ENCODE measurements at regions of chr9 and their contacts with region 1.

Region 1: GRCh38 chr9:133103183-133103986 is 17.7 kb downstream of the RALGDS start:
- DNase-seq: peak; percentile 74
- ATAC-seq: peak; percentile 89
- H3K4me3 ChIP-seq: no peak overlapping the region
- H3K4me3 Mint-ChIP-seq: no peak overlapping the region
- H3K27ac ChIP-seq: no peak overlapping the region
- H3K27ac Mint-ChIP-seq: peak overlapping the region; percentile 21
- H3K4me1 ChIP-seq: no peaks in the 10 kb centered on the region
- H3K4me1 Mint-ChIP-seq: no peaks in the 10 kb centered on the region
- H3K27me3 ChIP-seq: no peaks in the 10 kb centered on the region
- H3K27me3 Mint-ChIP-seq: no peaks in the 10 kb centered on the region
- CTCF ChIP-seq: peak; percentile 97

Region 2: GRCh38 chr9:133115448-133116345 is 12.3 kb after region 1 on chr9:
- CTCF ChIA-PET with region 1: interaction called, 34 read pairs
- POLR2A ChIA-PET with region 1: interaction called, 3 read pairs
- intact Hi-C with region 1: no loop called
- DNase-seq: peak; percentile 66
- ATAC-seq: peak; percentile 56
- H3K4me3 ChIP-seq: no peak overlapping the region
- H3K4me3 Mint-ChIP-seq: peak overlapping the region; percentile 67
- H3K27ac ChIP-seq: peak overlapping the region in 1 of 2 donors; percentile 57
- H3K27ac Mint-ChIP-seq: peak overlapping the region; percentile 85
- H3K4me1 ChIP-seq: peaks cover 55 to 68% of the 10 kb centered on the region in 2 donors
- H3K4me1 Mint-ChIP-seq: peaks cover 68% of the 10 kb centered on the region
- H3K27me3 ChIP-seq: no peaks in the 10 kb centered on the region
- H3K27me3 Mint-ChIP-seq: no peaks in the 10 kb centered on the region
- CTCF ChIP-seq: no peak

Region 3: GRCh38 chr9:133121198-133121939 is 18.0 kb after region 1 on chr9 and contains the start of gene RALGDS:
- CTCF ChIA-PET with region 1: interaction called, 34 read pairs
- POLR2A ChIA-PET with region 1: interaction called, 3 read pairs
- intact Hi-C with region 1: loop called (anchors 1 kb)
- DNase-seq: peak; percentile 95
- ATAC-seq: peak; percentile 84
- H3K4me3 ChIP-seq: peak within 1 kb of the TSS; percentile 4 to 75 (median 56)
- H3K4me3 Mint-ChIP-seq: peak within 1 kb of the TSS; percentile 89
- H3K27ac ChIP-seq: peak within 1 kb of the TSS; percentile 97 to 99
- H3K27ac Mint-ChIP-seq: peak within 1 kb of the TSS; percentile 99
- H3K4me1 ChIP-seq: peaks cover 27 to 45% of the 10 kb centered on the region in 2 donors
- H3K4me1 Mint-ChIP-seq: peaks cover 62% of the 10 kb centered on the region
- H3K27me3 ChIP-seq: no peaks in the 10 kb centered on the region
- H3K27me3 Mint-ChIP-seq: no peaks in the 10 kb centered on the region
- CTCF ChIP-seq: no peak
- total RNA-seq, gene RALGDS: 55.7 and 62.4 TPM in 2 replicates

Region 4: DNA sequence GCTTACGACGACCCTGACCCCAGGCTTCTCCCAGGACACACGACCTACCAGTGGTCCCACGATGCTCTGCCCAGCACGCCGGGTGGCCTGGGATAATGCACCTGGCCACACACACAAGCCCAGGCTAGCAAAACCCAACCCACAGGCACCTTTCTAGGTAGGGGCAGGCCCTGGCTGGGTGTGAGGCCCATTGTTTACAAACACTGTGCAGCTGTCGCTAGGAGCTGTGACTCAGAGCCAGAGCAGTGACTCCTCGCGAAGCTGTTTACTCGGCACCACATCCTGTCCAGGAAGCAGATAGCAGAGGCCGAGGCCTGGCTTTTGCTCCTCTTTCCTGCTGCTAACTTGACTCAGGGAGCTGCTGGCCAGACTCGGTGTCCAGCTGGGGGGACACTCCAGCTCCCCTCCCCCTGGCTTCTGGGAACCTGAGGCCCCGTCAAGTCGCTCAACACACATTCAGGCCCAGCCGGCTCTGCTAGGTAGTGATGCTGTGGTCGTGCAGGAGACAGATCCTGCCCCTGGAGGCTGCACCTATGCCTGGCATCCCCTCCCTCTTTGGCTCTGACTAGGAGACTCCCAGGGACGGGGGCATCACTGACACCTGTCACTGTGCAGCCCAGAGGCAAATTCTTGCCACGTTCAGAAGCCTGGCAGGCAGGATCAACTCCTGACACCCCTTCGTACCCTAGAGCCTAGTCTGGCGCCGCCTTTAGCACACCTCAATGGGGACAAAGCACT is 30.5 kb after region 1 on chr9:
- CTCF ChIA-PET with region 1: interaction called, 11 read pairs
- POLR2A ChIA-PET with region 1: interaction called, 4 read pairs
- intact Hi-C with region 1: no loop called
- DNase-seq: peak; percentile 87
- ATAC-seq: peak; percentile 82
- H3K4me3 ChIP-seq: no peak overlapping the region
- H3K4me3 Mint-ChIP-seq: peak overlapping the region; percentile 80
- H3K27ac ChIP-seq: peak overlapping the region; percentile 92 to 95
- H3K27ac Mint-ChIP-seq: peak overlapping the region; percentile 100
- H3K4me1 ChIP-seq: peaks cover 28 to 55% of the 10 kb centered on the region in 2 donors
- H3K4me1 Mint-ChIP-seq: peaks cover 55% of the 10 kb centered on the region
- H3K27me3 ChIP-seq: no peaks in the 10 kb centered on the region
- H3K27me3 Mint-ChIP-seq: no peaks in the 10 kb centered on the region
- CTCF ChIP-seq: no peak

Region 5: GRCh38 chr9:133506653-133507038 is 403.3 kb after region 1 on chr9:
- CTCF ChIA-PET with region 1: no interaction called
- POLR2A ChIA-PET with region 1: no interaction called
- intact Hi-C with region 1: no loop called
- DNase-seq: no peak
- ATAC-seq: no peak
- H3K4me3 ChIP-seq: no peak overlapping the region
- H3K4me3 Mint-ChIP-seq: no peak overlapping the region
- H3K27ac ChIP-seq: no peak overlapping the region
- H3K27ac Mint-ChIP-seq: no peak overlapping the region
- H3K4me1 ChIP-seq: peaks cover 0 to 4% of the 10 kb centered on the region in 2 donors
- H3K4me1 Mint-ChIP-seq: no peaks in the 10 kb centered on the region
- H3K27me3 ChIP-seq: peaks cover 0 to 13% (median 1%) of the 10 kb centered on the region in 4 experiments
- H3K27me3 Mint-ChIP-seq: peaks cover 15% of the 10 kb centered on the region
- CTCF ChIP-seq: no peak